ENCODE measurements at regions of chr1 and their contacts with region 1.

Region 1: GRCh38 chr1:175497501-175497900 is 245.9 kb downstream of the TNR start:
- DNase-seq: no peak
- H3K4me3 ChIP-seq: no peak overlapping the region
- H3K27ac ChIP-seq: no peak overlapping the region
- H3K4me1 ChIP-seq: no peaks in the 10 kb centered on the region
- H3K27me3 ChIP-seq: no peaks in the 10 kb centered on the region
- CTCF ChIP-seq: no peak
- POLR2A ChIP-seq: no peak

Region 2: DNA sequence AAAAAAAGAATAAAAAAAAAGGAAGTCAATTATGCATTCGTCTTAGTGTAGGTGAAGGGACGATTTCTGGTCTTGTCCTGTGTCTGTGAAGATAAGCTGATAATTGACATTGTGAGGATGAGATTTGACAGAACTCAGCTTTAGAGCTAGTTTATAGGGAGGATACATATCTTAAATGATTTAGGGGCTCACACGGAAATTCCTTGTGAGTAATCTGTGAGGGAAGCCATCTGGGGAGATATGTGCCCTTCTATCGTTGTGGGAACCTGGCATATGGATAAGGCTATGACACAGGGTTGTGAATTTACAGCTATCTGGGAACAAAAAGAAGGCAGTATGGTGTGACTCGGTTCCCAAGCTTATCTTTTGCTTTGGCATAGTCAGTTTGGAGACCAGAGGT is 1267.1 kb before region 1 on chr1:
- intact Hi-C with region 1: no loop called
- DNase-seq: no peak
- H3K4me3 ChIP-seq: no peak overlapping the region
- H3K27ac ChIP-seq: no peak overlapping the region
- H3K4me1 ChIP-seq: no peaks in the 10 kb centered on the region
- H3K27me3 ChIP-seq: no peaks in the 10 kb centered on the region
- CTCF ChIP-seq: no peak
- POLR2A ChIP-seq: no peak

Region 3: DNA sequence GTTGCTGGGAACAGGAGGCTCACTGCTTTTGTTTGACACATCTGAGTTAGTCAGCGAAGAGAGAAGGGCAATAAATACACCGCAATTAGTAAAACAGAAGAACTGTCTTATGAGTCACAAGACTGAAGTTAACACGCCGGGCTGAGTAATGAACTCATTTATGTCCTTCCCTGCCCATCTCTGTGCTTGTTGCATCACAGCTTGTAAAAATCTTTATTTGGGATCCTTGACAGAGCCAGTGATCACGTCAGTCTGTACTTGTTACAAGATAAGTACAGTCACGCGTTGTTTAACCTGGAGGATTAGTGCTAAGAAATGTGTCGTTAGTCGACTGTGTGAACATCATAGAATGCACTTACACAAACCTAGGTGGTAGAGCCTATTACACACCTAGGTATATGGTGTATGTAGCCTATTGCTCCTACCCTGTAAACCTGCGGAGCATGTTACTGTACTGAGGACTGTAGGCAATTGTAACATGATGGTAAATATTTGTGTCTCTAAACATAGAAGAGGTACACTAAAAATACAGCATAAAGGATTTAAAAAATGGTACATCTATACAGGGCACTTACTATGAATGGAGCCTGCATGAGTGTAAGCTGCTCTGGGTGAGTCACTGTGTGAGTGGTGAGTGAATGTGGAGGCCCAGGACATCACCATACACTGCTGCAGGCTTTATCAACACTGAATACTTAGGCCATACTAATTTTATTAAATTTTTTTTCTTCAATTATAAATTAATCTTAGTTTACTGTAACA is 26.3 kb before region 1 on chr1:
- intact Hi-C with region 1: loop called (anchors 2 kb)
- DNase-seq: no peak
- H3K4me3 ChIP-seq: no peak overlapping the region
- H3K27ac ChIP-seq: no peak overlapping the region
- H3K4me1 ChIP-seq: no peaks in the 10 kb centered on the region
- H3K27me3 ChIP-seq: peaks cover 0 to 2% of the 10 kb centered on the region in 2 donors
- CTCF ChIP-seq: no peak
- POLR2A ChIP-seq: no peak

Measured in breast epithelium (tissue), 4 donors.